ENCODE measurements at regions of chr19 and their contacts with region 1.

Region 1: GRCh38 chr19:52189735-52190486 is at the start of gene PPP2R1A:
- DNase-seq: peak; percentile 98 to 100
- H3K4me3 ChIP-seq: peak within 1 kb of the TSS; percentile 93
- H3K4me3 Mint-ChIP-seq: peak within 1 kb of the TSS; percentile 81
- H3K27ac Mint-ChIP-seq: peak within 1 kb of the TSS; percentile 98
- H3K4me1 ChIP-seq: peaks cover 9% of the 10 kb centered on the region
- H3K4me1 Mint-ChIP-seq: peaks cover 23% of the 10 kb centered on the region
- H3K27me3 ChIP-seq: no peaks in the 10 kb centered on the region
- H3K27me3 Mint-ChIP-seq: no peaks in the 10 kb centered on the region
- CTCF ChIP-seq: no peak
- total RNA-seq, gene PPP2R1A: 279 and 291 TPM in 2 replicates

Region 2: GRCh38 chr19:52139252-52140031 is 50.5 kb before region 1 on chr19 and contains the start of gene ZNF616:
- CTCF ChIA-PET with region 1: interaction called, 16 read pairs
- POLR2A ChIA-PET with region 1: interaction called, 7 read pairs
- intact Hi-C with region 1: loop called (anchors 1 kb)
- DNase-seq: peak; percentile 97 to 98
- H3K4me3 ChIP-seq: peak within 1 kb of the TSS; percentile 82
- H3K4me3 Mint-ChIP-seq: peak within 1 kb of the TSS; percentile 93
- H3K27ac Mint-ChIP-seq: peak within 1 kb of the TSS; percentile 96
- H3K4me1 ChIP-seq: no peaks in the 10 kb centered on the region
- H3K4me1 Mint-ChIP-seq: peaks cover 10% of the 10 kb centered on the region
- H3K27me3 ChIP-seq: no peaks in the 10 kb centered on the region
- H3K27me3 Mint-ChIP-seq: no peaks in the 10 kb centered on the region
- CTCF ChIP-seq: peak; percentile 87
- total RNA-seq, gene ZNF616: 5.7 and 7.1 TPM in 2 replicates

Region 3: DNA sequence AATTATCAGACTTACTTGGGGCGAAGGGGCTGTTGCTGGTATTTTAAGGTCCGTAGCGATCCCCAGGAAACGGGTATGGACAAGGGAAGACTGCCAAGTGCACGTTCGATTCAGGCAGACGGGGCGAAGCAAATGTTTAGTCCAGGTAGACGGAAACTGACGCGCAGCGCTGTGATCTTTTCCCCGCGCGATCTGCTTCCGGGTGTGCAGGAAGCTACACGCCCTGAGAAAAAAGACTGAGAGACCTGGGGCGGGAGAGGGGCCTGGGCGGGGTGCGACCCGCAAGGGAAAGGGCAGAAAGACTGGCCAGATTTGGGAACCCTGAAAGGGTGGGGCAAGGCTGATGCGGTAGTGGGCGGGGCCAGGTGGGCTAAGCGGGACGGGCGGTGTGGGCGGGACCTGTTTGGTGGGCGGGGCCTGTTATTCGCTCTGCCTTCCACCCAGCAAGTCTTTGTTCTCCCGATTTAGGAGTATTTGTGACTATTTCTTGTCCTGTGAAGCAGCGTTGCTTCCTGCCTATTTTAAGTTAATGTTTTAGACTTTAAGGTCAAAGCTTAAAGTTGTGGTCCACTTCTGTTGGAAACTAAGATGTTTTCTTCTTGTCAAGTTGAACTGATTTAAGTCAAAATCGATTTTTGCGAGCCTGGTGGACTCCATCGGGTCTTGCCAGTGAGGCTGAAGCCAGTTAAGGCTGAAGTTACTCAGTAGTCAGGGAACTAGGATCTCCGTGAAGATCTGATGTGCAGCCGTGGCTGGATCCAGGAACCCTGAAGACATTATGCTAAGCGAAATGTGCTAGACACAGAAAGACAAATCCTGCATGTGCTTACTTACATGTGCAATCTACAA is 18.4 kb before region 1 on chr19 and contains the start of gene ZNF836:
- CTCF ChIA-PET with region 1: no interaction called
- POLR2A ChIA-PET with region 1: interaction called, 25 read pairs
- intact Hi-C with region 1: loop called (anchors 1 kb)
- DNase-seq: peak; percentile 85 to 88
- H3K4me3 ChIP-seq: peak within 1 kb of the TSS; percentile 71
- H3K4me3 Mint-ChIP-seq: peak within 1 kb of the TSS; percentile 98
- H3K27ac Mint-ChIP-seq: peak within 1 kb of the TSS; percentile 93
- H3K4me1 ChIP-seq: peaks cover 3% of the 10 kb centered on the region; the same call in 1 of the 2 replicates
- H3K4me1 Mint-ChIP-seq: peaks cover 14% of the 10 kb centered on the region
- H3K27me3 ChIP-seq: no peaks in the 10 kb centered on the region
- H3K27me3 Mint-ChIP-seq: no peaks in the 10 kb centered on the region
- CTCF ChIP-seq: no peak
- total RNA-seq, gene ZNF836: 6.3 and 8.8 TPM in 2 replicates

Region 4: DNA sequence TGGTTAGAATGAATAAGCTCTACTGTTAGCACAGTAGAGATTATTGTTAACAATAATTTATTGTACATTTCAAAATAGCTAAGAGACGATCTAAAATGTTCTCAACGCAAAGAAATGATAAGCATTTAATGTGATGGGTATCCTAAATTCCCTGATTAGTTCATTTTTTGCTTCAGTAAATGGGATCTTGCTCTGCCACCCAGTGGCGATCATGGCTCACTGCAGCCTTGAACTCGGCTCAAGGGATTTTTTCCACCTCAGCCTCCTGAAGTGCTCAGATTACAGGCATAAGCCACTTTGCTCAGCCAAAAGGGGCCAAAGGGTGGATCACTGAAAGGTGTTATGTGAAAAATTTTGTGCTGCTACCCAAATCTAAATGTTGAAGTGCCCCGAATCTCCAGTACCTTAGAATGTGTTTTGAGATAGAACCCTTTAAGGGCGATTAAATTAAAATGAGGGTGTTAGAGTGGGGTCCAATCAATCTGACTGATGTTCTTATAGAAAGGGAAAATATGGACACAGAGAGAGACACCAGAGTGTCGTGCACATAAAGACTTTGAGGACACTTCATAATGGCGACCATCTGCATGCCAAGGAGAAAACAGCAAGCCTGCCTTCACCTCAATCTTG is 48.0 kb after region 1 on chr19:
- CTCF ChIA-PET with region 1: no interaction called
- POLR2A ChIA-PET with region 1: no interaction called
- intact Hi-C with region 1: loop called (anchors 5 kb)
- DNase-seq: peak; percentile 52 to 69
- H3K4me3 ChIP-seq: no peak overlapping the region
- H3K4me3 Mint-ChIP-seq: no peak overlapping the region
- H3K27ac Mint-ChIP-seq: no peak overlapping the region
- H3K4me1 ChIP-seq: no peaks in the 10 kb centered on the region
- H3K4me1 Mint-ChIP-seq: no peaks in the 10 kb centered on the region
- H3K27me3 ChIP-seq: no peaks in the 10 kb centered on the region
- H3K27me3 Mint-ChIP-seq: no peaks in the 10 kb centered on the region
- CTCF ChIP-seq: peak; percentile 88 to 90

Region 5: GRCh38 chr19:52527134-52527955 is 337.4 kb after region 1 on chr19 and contains the start of gene ZNF808:
- CTCF ChIA-PET with region 1: no interaction called
- POLR2A ChIA-PET with region 1: interaction called, 11 read pairs
- intact Hi-C with region 1: no loop called
- DNase-seq: peak; percentile 93 to 97
- H3K4me3 ChIP-seq: peak within 1 kb of the TSS; percentile 73
- H3K4me3 Mint-ChIP-seq: peak within 1 kb of the TSS; percentile 74
- H3K27ac Mint-ChIP-seq: peak within 1 kb of the TSS; percentile 98
- H3K4me1 ChIP-seq: no peaks in the 10 kb centered on the region
- H3K4me1 Mint-ChIP-seq: peaks cover 11% of the 10 kb centered on the region
- H3K27me3 ChIP-seq: no peaks in the 10 kb centered on the region
- H3K27me3 Mint-ChIP-seq: no peaks in the 10 kb centered on the region
- CTCF ChIP-seq: peak; percentile 76 to 82
- total RNA-seq, gene ZNF808: 19.3 and 19.8 TPM in 2 replicates

Measured in Caco-2 (cell line).